CD4-positive, alpha-beta memory T cell (primary cell): ENCODE measurements at regions of chr2 and their contacts with region 1.

Region 1: DNA sequence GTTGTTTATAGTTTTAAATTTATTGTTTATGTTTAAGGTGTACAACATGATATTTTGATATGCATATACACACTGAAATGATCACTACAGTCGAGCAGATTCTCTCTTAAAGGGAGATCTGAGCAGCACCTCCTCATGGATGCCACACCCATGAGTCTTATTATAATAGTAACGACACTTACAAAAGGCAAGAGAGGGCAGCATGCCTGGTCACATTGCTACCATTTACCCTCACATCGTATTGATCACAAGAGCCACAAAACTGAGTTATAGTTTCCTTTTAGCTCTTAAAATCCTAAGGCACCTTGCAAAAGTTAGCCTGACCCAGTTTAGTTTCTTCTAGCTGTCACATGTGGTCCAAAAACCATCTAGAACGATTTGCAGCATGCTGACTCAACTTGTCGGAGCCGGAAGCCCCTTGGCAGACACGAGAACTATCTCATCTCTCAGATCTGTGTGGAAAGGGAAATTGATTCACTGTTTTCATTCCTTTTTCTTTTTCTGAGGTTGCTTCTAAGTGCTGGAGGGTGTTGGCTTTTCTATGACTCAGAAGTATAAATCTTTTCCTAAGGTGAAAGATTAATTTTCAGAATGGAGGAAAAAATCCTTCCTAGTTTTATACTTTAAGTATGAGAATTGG is 85.3 kb downstream of the CDC42EP3 start:
- DNase-seq: peak; percentile 80 to 93 (median 86)
- H3K4me3 ChIP-seq: peak overlapping the region in 1 of 2 donors; percentile 7
- H3K4me3 Mint-ChIP-seq: peak overlapping the region; percentile 55 to 96 (median 80)
- H3K27ac ChIP-seq: peak overlapping the region; percentile 76
- H3K27ac Mint-ChIP-seq: peak overlapping the region; percentile 87 to 98 (median 94)
- H3K4me1 ChIP-seq: peaks cover 95% of the 10 kb centered on the region
- H3K4me1 Mint-ChIP-seq: peaks cover 77 to 95% (median 88%) of the 10 kb centered on the region in 4 donors
- H3K27me3 ChIP-seq: no peaks in the 10 kb centered on the region
- H3K27me3 Mint-ChIP-seq: no peaks in the 10 kb centered on the region

Region 2: DNA sequence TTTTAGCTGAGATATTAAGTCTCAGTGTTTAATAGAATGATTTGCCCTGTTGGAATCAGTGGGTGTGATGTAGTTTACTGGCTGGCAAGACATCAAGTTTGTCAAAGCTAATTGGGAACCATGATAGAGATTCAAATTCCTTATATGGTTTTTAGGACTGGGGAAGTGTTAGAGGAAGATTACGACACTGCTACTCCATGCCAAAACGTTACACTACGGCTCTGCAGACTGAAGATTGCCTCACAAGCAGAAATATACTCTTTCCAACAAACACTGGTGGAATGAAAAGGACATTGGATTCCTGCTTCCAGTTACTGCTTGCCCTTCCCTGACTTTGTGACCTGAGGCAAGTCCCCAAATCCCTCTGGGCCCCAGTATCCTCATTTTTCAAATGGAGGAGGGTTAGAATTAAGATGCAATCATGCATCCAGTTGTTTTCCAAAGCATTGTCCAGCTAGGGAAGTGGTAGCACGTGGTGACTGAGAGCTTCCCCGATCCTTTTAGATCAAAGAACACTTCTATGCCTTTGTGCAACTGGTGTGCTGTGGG is 62.2 kb before region 1 on chr2:
- CTCF ChIA-PET with region 1: no interaction called
- POLR2A ChIA-PET with region 1: no interaction called
- intact Hi-C with region 1: no loop called
- DNase-seq: no peak
- H3K4me3 ChIP-seq: no peak overlapping the region
- H3K4me3 Mint-ChIP-seq: peak overlapping the region in 1 of 8 donors; percentile 55
- H3K27ac ChIP-seq: no peak overlapping the region
- H3K27ac Mint-ChIP-seq: no peak overlapping the region
- H3K4me1 ChIP-seq: no peaks in the 10 kb centered on the region
- H3K4me1 Mint-ChIP-seq: peaks cover 0 to 3% (median 0%) of the 10 kb centered on the region in 4 donors
- H3K27me3 ChIP-seq: no peaks in the 10 kb centered on the region
- H3K27me3 Mint-ChIP-seq: no peaks in the 10 kb centered on the region

Region 3: DNA sequence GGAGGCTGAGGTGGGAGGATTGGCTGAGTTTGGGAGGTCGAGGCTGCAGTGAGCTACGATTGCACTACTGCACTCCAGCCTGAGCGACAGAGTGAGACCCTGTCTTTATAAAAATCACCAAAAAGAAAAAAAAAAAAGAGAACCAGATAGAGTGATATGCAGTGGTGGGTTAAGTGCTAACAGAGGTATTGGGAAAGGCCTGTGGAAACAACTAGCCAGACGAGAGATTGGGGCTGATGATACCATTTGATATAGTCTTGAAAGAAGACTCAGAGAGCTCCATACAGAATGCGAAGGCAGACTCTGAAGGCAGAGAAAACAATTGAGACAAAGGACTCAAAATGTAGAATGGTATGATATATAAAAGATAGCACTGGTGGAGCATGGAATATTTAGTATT is 48.8 kb before region 1 on chr2:
- CTCF ChIA-PET with region 1: interaction called, 3 read pairs
- POLR2A ChIA-PET with region 1: interaction called, 3 read pairs
- intact Hi-C with region 1: loop called (anchors 5 kb)
- DNase-seq: no peak
- H3K4me3 ChIP-seq: no peak overlapping the region
- H3K4me3 Mint-ChIP-seq: no peak overlapping the region
- H3K27ac ChIP-seq: no peak overlapping the region
- H3K27ac Mint-ChIP-seq: no peak overlapping the region
- H3K4me1 ChIP-seq: no peaks in the 10 kb centered on the region
- H3K4me1 Mint-ChIP-seq: peaks cover 0 to 5% (median under 1%) of the 10 kb centered on the region in 4 donors
- H3K27me3 ChIP-seq: no peaks in the 10 kb centered on the region
- H3K27me3 Mint-ChIP-seq: peaks cover 0 to 1% of the 10 kb centered on the region in 2 donors

Region 4: DNA sequence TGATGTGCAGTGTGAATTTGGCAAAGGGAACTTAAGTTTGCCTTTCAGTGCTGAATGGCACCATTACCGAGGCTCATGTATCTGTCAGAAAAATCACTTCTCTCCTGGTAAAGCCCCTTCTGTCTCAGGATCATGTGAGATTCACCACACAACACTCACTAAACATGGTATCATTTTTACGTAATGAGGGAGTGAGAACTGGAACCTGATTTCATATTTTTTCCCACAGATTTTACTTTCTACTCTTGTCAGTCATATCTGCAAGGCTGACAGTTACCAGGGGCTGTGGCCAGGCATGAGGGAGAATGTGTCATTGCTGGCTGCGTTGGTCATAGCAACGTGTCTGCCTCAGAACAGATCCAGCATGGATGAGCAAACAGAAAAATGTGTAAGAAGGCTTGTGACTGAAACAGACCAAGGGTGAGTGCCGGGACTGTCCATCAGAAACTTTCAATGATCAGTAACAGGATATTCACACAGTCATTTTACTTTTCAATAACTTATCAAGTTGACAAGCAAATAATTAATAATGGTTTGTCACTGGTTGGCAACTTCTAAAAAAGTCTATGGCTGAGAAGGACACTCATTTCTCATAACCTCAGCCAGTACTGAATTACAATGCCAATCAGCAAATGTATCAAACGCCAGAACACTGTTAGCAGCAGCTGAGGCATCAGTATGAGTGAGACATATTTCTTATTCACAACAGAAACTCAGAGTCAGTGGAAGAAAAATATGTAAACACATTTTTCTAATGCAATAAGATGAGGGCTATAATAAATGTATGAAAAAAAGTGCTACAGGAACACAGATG is 15.1 kb before region 1 on chr2:
- CTCF ChIA-PET with region 1: interaction called, 9 read pairs
- POLR2A ChIA-PET with region 1: interaction called, 25 read pairs
- intact Hi-C with region 1: loop called (anchors 2 kb)
- DNase-seq: no peak
- H3K4me3 ChIP-seq: no peak overlapping the region
- H3K4me3 Mint-ChIP-seq: no peak overlapping the region
- H3K27ac ChIP-seq: no peak overlapping the region
- H3K27ac Mint-ChIP-seq: no peak overlapping the region
- H3K4me1 ChIP-seq: peaks cover 11% of the 10 kb centered on the region
- H3K4me1 Mint-ChIP-seq: peaks cover 14 to 39% (median 20%) of the 10 kb centered on the region in 4 donors
- H3K27me3 ChIP-seq: no peaks in the 10 kb centered on the region
- H3K27me3 Mint-ChIP-seq: no peaks in the 10 kb centered on the region

Region 5: DNA sequence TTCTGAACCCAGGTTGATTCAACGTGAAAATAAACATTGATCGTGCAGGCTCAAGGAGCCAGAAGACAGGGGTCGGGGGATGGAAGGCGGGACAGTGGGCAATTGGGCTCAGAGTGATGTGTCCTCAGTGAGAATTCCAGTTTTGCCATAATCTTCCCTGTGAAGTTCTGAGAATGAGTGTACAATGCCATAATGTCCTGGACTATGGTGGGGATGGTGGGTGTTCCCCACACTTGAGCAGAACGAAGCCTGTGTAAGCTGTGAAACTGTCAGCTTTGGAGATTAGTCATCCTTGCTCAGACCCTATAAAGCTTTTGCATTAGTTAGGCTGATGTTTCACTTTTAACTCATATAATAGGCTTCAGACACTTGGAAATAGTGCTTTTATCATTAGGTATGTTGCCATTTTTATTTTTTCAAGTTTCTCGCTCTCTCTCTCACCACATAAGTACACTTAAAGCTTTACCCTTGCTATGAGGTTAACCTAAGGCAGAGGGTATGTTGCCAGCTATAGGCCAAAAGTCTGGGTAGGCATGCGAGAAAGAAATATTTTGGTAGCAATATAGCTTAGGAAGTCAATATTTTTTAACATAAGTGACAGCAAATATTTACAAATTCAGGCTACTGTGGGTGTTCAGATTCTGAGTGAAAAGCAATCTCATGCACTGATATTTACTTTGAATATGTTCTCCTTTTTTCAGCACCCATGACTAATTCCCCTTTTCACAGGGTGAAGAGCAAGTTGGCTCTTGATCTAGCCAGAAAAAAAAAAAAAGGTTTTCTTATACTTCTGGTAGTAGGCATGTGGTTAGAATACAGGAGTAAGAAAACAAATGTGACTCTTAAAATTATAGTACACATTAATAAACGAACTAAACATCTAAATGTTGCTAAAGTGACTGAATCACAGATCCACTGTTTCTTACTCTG is 38.1 kb after region 1 on chr2:
- CTCF ChIA-PET with region 1: interaction called, 4 read pairs
- POLR2A ChIA-PET with region 1: interaction called, 39 read pairs
- intact Hi-C with region 1: loop called (anchors 1 kb)
- DNase-seq: peak in 2 of 5 donors; percentile 20 to 43
- H3K4me3 ChIP-seq: peak overlapping the region in 1 of 2 donors; percentile 36
- H3K4me3 Mint-ChIP-seq: peak overlapping the region; percentile 1 to 83 (median 78)
- H3K27ac ChIP-seq: peak overlapping the region; percentile 66
- H3K27ac Mint-ChIP-seq: peak overlapping the region; percentile 87 to 97 (median 91)
- H3K4me1 ChIP-seq: peaks cover 75% of the 10 kb centered on the region
- H3K4me1 Mint-ChIP-seq: peaks cover 52 to 84% (median 68%) of the 10 kb centered on the region in 4 donors
- H3K27me3 ChIP-seq: no peaks in the 10 kb centered on the region
- H3K27me3 Mint-ChIP-seq: no peaks in the 10 kb centered on the region

Region 6: GRCh38 chr2:37648331-37649011 is 62.4 kb after region 1 on chr2:
- CTCF ChIA-PET with region 1: interaction called, 21 read pairs
- POLR2A ChIA-PET with region 1: interaction called, 32 read pairs
- intact Hi-C with region 1: no loop called
- DNase-seq: peak; percentile 42 to 76 (median 50)
- H3K4me3 ChIP-seq: peak overlapping the region in 1 of 2 donors; percentile 50
- H3K4me3 Mint-ChIP-seq: peak overlapping the region in 7 of 8 donors; percentile 66 to 91 (median 80)
- H3K27ac ChIP-seq: peak overlapping the region; percentile 56
- H3K27ac Mint-ChIP-seq: peak overlapping the region; percentile 85 to 98 (median 92)
- H3K4me1 ChIP-seq: peaks cover 97% of the 10 kb centered on the region
- H3K4me1 Mint-ChIP-seq: peaks cover 76 to 96% (median 88%) of the 10 kb centered on the region in 4 donors
- H3K27me3 ChIP-seq: no peaks in the 10 kb centered on the region
- H3K27me3 Mint-ChIP-seq: no peaks in the 10 kb centered on the region

Region 7: GRCh38 chr2:37832590-37833197 is 246.6 kb after region 1 on chr2:
- CTCF ChIA-PET with region 1: interaction called, 10 read pairs
- POLR2A ChIA-PET with region 1: no interaction called
- intact Hi-C with region 1: no loop called
- DNase-seq: peak; percentile 69 to 75 (median 74)
- H3K4me3 ChIP-seq: no peak overlapping the region
- H3K4me3 Mint-ChIP-seq: no peak overlapping the region
- H3K27ac ChIP-seq: no peak overlapping the region
- H3K27ac Mint-ChIP-seq: peak overlapping the region in 2 of 7 donors; percentile 16 to 48
- H3K4me1 ChIP-seq: peaks cover 16% of the 10 kb centered on the region
- H3K4me1 Mint-ChIP-seq: peaks cover 5 to 26% (median 11%) of the 10 kb centered on the region in 4 donors
- H3K27me3 ChIP-seq: no peaks in the 10 kb centered on the region
- H3K27me3 Mint-ChIP-seq: no peaks in the 10 kb centered on the region

Region 8: GRCh38 chr2:37916512-37917082 is 330.5 kb after region 1 on chr2:
- CTCF ChIA-PET with region 1: no interaction called
- POLR2A ChIA-PET with region 1: no interaction called
- intact Hi-C with region 1: no loop called
- DNase-seq: no peak
- H3K4me3 ChIP-seq: no peak overlapping the region
- H3K4me3 Mint-ChIP-seq: no peak overlapping the region
- H3K27ac ChIP-seq: no peak overlapping the region
- H3K27ac Mint-ChIP-seq: no peak overlapping the region
- H3K4me1 ChIP-seq: no peaks in the 10 kb centered on the region
- H3K4me1 Mint-ChIP-seq: no peaks in the 10 kb centered on the region
- H3K27me3 ChIP-seq: no peaks in the 10 kb centered on the region
- H3K27me3 Mint-ChIP-seq: peaks cover 7 to 22% of the 10 kb centered on the region in 2 donors